GM13977 (cell line): ENCODE measurements at regions of chr10 and their contacts with region 1.

Region 1: GRCh38 chr10:52836816-52837215 is 64.2 kb upstream of the MBL2 start:
- DNase-seq: no peak
- CTCF ChIP-seq: no peak

Region 2: GRCh38 chr10:52740913-52741675 is 95.7 kb before region 1 on chr10:
- in situ Hi-C with region 1: loop called (anchors 25 kb)
- DNase-seq: peak; percentile 53
- CTCF ChIP-seq: peak; percentile 91

Region 3: GRCh38 chr10:53153831-53154230 is 317.0 kb after region 1 on chr10:
- in situ Hi-C with region 1: no loop called
- DNase-seq: no peak
- CTCF ChIP-seq: no peak